ENCODE measurements at regions of chr9 and their contacts with region 1.

Region 1: GRCh38 chr9:107340920-107341632 is 58.0 kb downstream of the RAD23B start:
- DNase-seq: peak; percentile 92
- ATAC-seq: peak; percentile 74
- H3K4me3 Mint-ChIP-seq: no peak overlapping the region
- H3K27ac Mint-ChIP-seq: peak overlapping the region; percentile 71; the same call in 1 of the 2 replicates
- H3K4me1 Mint-ChIP-seq: peaks cover 22% of the 10 kb centered on the region
- H3K27me3 Mint-ChIP-seq: no peaks in the 10 kb centered on the region
- CTCF ChIP-seq: peak; percentile 96

Region 2: DNA sequence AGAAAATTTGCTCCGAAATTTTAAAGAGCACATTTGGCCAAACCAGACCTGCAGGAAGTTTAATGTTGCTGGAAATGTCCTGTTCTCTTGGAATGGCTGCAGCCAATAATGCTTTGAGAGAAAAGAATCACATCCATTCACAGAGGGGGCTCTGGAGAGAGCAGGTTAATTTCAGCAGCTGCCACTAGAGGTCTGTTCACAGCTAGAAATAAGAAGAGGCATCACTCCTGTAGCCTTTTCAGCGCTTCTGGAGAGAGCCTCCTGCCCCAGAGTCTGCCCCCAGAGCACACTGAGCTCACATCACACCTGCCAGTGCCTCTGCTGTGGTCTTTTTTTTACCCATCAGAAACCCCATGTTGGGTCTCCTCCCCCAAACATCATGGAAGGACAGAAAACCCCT is 182.8 kb before region 1 on chr9:
- CTCF ChIA-PET with region 1: interaction called, 10 read pairs
- POLR2A ChIA-PET with region 1: no interaction called
- DNase-seq: peak; percentile 56
- ATAC-seq: peak; percentile 98
- H3K4me3 Mint-ChIP-seq: no peak overlapping the region
- H3K27ac Mint-ChIP-seq: no peak overlapping the region
- H3K4me1 Mint-ChIP-seq: peaks cover 9% of the 10 kb centered on the region; the same call in 1 of the 2 replicates
- H3K27me3 Mint-ChIP-seq: no peaks in the 10 kb centered on the region
- CTCF ChIP-seq: peak; percentile 33; the same call in 1 of the 2 replicates

Region 3: DNA sequence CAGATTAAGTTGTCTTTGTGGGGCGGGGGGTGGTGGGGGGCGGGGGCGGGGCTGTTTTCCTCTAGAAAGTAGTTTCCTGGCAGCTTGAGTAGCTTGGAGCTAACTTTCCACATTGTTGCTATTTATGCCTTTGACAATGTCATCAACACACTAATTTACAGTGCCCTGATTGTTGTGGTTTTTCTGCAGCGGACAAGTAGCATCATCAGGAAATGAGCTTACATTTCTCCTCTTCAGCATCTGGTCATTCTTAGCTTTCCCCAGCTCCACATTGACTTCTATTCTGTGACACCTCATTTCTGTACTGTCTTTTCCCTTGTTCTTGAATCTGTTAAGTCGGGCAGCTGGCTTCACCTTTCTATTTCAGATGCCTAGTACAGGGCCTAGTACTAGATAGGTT is 170.3 kb before region 1 on chr9:
- CTCF ChIA-PET with region 1: no interaction called
- POLR2A ChIA-PET with region 1: no interaction called
- DNase-seq: no peak
- ATAC-seq: no peak
- H3K4me3 Mint-ChIP-seq: no peak overlapping the region
- H3K27ac Mint-ChIP-seq: no peak overlapping the region
- H3K4me1 Mint-ChIP-seq: peaks cover 4% of the 10 kb centered on the region; the same call in 1 of the 2 replicates
- H3K27me3 Mint-ChIP-seq: no peaks in the 10 kb centered on the region
- CTCF ChIP-seq: no peak

Region 4: DNA sequence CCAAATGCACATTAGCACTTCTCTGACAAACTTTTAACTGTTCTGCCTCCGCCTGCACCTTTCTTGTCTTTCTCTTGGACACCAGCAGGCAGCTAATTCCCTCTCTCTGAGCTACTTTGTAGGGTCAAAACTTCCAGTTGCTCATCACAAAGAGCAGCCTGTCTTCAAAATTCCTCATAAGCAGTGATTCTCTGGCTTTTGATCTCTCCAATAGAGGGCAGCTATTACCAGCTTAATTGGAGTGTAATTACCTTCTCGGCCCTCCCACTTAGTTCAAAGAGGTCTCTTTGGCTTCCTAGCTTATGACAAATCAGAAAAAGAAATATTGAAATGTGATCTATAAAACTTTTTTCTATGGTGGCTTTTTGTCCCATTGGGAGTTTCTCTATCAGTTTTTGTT is 101.6 kb before region 1 on chr9:
- CTCF ChIA-PET with region 1: interaction called, 15 read pairs
- POLR2A ChIA-PET with region 1: no interaction called
- DNase-seq: no peak
- ATAC-seq: no peak
- H3K4me3 Mint-ChIP-seq: no peak overlapping the region
- H3K27ac Mint-ChIP-seq: no peak overlapping the region
- H3K4me1 Mint-ChIP-seq: peaks cover 52% of the 10 kb centered on the region
- H3K27me3 Mint-ChIP-seq: no peaks in the 10 kb centered on the region; the same call in 1 of the 2 replicates
- CTCF ChIP-seq: no peak

Region 5: DNA sequence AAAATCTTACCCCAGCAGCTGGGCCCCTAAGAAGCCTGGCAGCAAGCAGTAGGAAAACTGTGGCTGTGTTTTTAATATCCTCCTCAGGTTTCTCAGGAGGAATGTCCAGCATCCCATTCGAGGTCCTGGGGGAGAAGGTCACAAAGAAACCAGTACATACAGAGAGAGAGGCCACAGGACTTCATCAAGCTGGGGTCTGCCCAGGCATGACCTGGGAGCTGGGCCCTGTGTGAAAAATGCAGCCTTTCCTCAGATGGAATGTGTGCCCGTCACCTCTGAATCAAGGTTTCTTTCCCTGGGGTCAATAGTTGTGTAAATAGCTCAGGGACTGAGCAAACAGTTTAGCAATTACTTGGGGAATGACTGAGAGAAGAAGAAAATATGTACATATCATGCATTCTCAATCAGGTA is 91.9 kb before region 1 on chr9:
- CTCF ChIA-PET with region 1: interaction called, 10 read pairs
- POLR2A ChIA-PET with region 1: no interaction called
- DNase-seq: peak; percentile 26
- ATAC-seq: peak; percentile 91
- H3K4me3 Mint-ChIP-seq: peak overlapping the region; percentile 12; the same call in 1 of the 2 replicates
- H3K27ac Mint-ChIP-seq: peak overlapping the region; percentile 95
- H3K4me1 Mint-ChIP-seq: peaks cover 25% of the 10 kb centered on the region
- H3K27me3 Mint-ChIP-seq: no peaks in the 10 kb centered on the region
- CTCF ChIP-seq: no peak

Region 6: DNA sequence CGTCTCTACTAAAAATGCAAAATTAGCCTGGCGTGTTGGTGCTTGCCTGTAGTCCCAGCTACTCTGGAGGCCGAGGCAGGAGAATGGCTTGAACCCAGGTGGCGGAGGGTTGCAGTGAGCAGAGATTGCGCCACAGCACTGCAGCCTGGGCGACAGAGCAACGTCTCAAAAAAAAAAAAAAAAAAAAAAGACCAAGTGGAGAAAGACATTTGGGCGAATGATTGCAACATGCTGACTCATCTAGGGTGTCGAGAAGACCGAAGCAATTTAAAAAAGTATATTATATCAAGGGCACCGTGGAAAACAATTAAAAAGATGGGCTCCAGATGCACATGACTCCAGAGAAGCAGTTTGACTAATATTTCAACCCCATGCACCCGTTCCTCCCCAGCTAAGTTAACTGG is 139.3 kb after region 1 on chr9:
- CTCF ChIA-PET with region 1: no interaction called
- POLR2A ChIA-PET with region 1: no interaction called
- DNase-seq: no peak
- ATAC-seq: no peak
- H3K4me3 Mint-ChIP-seq: no peak overlapping the region
- H3K27ac Mint-ChIP-seq: no peak overlapping the region
- H3K4me1 Mint-ChIP-seq: peaks cover 2% of the 10 kb centered on the region; the same call in 1 of the 2 replicates
- H3K27me3 Mint-ChIP-seq: no peaks in the 10 kb centered on the region
- CTCF ChIP-seq: no peak